ENCODE measurements at regions of chr13 and their contacts with region 1.

Region 1: DNA sequence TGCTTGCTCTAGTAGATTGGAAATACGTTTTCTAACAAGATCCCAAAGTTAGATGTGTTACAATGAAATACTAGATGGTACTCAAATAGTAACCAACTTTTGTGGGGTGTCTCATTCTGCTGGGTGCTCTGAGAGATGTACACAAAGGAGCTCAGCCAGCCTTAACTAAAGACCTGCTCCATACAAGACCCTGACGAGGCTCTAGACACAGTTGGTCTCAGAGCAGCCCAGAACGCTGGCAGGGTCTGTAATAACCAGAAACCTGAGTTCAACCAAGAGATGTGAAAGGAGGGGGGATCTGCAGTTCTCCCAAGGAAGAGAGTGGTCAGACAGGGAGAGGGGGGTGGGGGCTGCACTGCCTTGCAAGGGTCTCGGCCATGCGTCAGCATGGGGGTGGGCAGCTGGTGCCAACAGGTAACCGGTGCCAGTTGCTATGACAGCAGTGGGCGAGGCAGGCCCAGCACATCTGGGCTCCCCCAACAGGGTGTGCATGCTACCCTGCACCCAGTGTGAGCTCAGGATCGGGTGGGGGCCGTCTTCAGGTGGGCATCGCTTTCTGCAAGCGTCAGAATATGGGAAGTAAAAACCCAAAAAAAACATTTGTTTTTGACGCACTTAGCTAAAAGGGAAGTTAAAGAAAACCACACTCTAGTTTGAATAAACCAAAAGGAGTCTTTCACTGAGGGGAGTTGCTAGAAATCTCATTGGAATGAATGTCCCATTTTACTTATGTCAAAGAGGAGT is 68.0 kb upstream of the GPR183 start:
- DNase-seq: no peak
- ATAC-seq: peak; percentile 83
- H3K4me3 ChIP-seq: peak overlapping the region; percentile 33; the same call in 1 of the 2 replicates
- H3K27ac ChIP-seq: peak overlapping the region; percentile 94
- H3K4me1 ChIP-seq: peaks cover 66% of the 10 kb centered on the region
- H3K27me3 ChIP-seq: no peaks in the 10 kb centered on the region
- CTCF ChIP-seq: 0 out of 6 replicates have a peak, but pooled peaks of 1 of the 3 experiments have one; percentile 0
- EP300 ChIP-seq: peak; percentile 85 to 91; a peak in 3 of 4 replicates
- POLR2A ChIP-seq: 0 out of 2 replicates have a peak, but pooled peaks have one; percentile 24
- RAD21 ChIP-seq: no peak

Region 2: GRCh38 chr13:99296398-99296797 is 78.8 kb before region 1 on chr13:
- CTCF ChIA-PET with region 1: interaction called, 4 read pairs
- POLR2A ChIA-PET with region 1: interaction called, 5 read pairs
- RAD21 ChIA-PET with region 1: interaction called, 28 read pairs
- SMC1A ChIA-PET with region 1: interaction called, 21 read pairs
- in situ Hi-C with region 1: no loop called
- intact Hi-C with region 1: no loop called
- DNase-seq: no peak
- ATAC-seq: peak; percentile 15
- H3K4me3 ChIP-seq: peak overlapping the region; percentile 58; the same call in 1 of the 2 replicates
- H3K27ac ChIP-seq: peak overlapping the region; percentile 62
- H3K4me1 ChIP-seq: peaks cover 14% of the 10 kb centered on the region
- H3K27me3 ChIP-seq: no peaks in the 10 kb centered on the region
- CTCF ChIP-seq: no peak
- EP300 ChIP-seq: no peak
- POLR2A ChIP-seq: no peak
- RAD21 ChIP-seq: peak; percentile 2; the same call in 1 of the 2 replicates

Region 3: GRCh38 chr13:99307648-99308339 is 67.4 kb before region 1 on chr13:
- CTCF ChIA-PET with region 1: interaction called, 9 read pairs
- POLR2A ChIA-PET with region 1: interaction called, 5 read pairs
- RAD21 ChIA-PET with region 1: interaction called, 16 read pairs
- SMC1A ChIA-PET with region 1: interaction called, 21 read pairs
- in situ Hi-C with region 1: no loop called
- intact Hi-C with region 1: loop called (anchors 2 kb)
- DNase-seq: no peak
- ATAC-seq: peak; percentile 50
- H3K4me3 ChIP-seq: peak overlapping the region; percentile 98
- H3K27ac ChIP-seq: peak overlapping the region; percentile 93
- H3K4me1 ChIP-seq: peaks cover 49% of the 10 kb centered on the region
- H3K27me3 ChIP-seq: no peaks in the 10 kb centered on the region
- CTCF ChIP-seq: no peak
- EP300 ChIP-seq: no peak
- POLR2A ChIP-seq: no peak; the same call in 1 of the 2 replicates
- RAD21 ChIP-seq: no peak

Region 4: GRCh38 chr13:99356158-99357091 is 18.7 kb before region 1 on chr13:
- CTCF ChIA-PET with region 1: interaction called, 4 read pairs
- POLR2A ChIA-PET with region 1: interaction called, 14 read pairs
- RAD21 ChIA-PET with region 1: interaction called, 7 read pairs
- SMC1A ChIA-PET with region 1: interaction called, 12 read pairs
- in situ Hi-C with region 1: no loop called
- intact Hi-C with region 1: no loop called
- DNase-seq: peak; percentile 92
- ATAC-seq: peak; percentile 81
- H3K4me3 ChIP-seq: peak overlapping the region; percentile 41; the same call in 1 of the 2 replicates
- H3K27ac ChIP-seq: peak overlapping the region; percentile 81
- H3K4me1 ChIP-seq: peaks cover 65% of the 10 kb centered on the region
- H3K27me3 ChIP-seq: no peaks in the 10 kb centered on the region
- CTCF ChIP-seq: no peak
- EP300 ChIP-seq: peak; percentile 43 to 83; a peak in 3 of 4 replicates
- POLR2A ChIP-seq: no peak
- RAD21 ChIP-seq: no peak

Region 5: GRCh38 chr13:99425485-99426341 is 50.5 kb after region 1 on chr13:
- CTCF ChIA-PET with region 1: interaction called, 5 read pairs
- POLR2A ChIA-PET with region 1: interaction called, 6 read pairs
- RAD21 ChIA-PET with region 1: interaction called, 6 read pairs
- SMC1A ChIA-PET with region 1: interaction called, 13 read pairs
- in situ Hi-C with region 1: no loop called
- intact Hi-C with region 1: no loop called
- DNase-seq: peak; percentile 90
- ATAC-seq: peak; percentile 71
- H3K4me3 ChIP-seq: peak overlapping the region; percentile 10
- H3K27ac ChIP-seq: peak overlapping the region; percentile 100
- H3K4me1 ChIP-seq: peaks cover 62% of the 10 kb centered on the region
- H3K27me3 ChIP-seq: no peaks in the 10 kb centered on the region
- CTCF ChIP-seq: no peak
- EP300 ChIP-seq: peak; percentile 55 to 89; a peak in 3 of 4 replicates
- POLR2A ChIP-seq: no peak
- RAD21 ChIP-seq: peak; percentile 18; the same call in 1 of the 2 replicates